ENCODE measurements at regions of chr1 and their contacts with region 1.

Region 1: DNA sequence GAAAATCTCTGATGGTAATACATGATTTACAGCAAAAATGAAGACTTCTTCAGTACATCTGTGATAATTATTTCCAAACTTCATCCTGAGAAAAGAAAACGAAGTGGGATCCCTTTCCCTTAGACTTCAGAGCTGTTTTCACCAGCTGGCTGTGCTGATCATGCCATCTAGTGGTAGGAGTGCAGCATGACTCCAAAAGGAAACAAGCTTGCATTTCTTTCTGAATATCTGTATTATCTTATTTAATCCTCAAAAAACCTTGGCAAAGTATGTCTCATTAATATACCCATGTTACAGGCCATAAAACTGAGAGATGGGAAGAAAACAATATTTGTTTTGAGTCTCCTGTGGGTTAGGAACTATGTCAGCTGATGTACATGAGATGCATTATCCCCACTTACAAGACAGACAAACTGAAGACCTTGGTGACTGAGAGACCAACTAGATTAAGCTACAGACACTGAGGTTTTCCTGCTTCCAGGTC is 9.8 kb upstream of the GJA8 start:
- DNase-seq: peak; percentile 34
- H3K4me3 Mint-ChIP-seq: no peak overlapping the region
- H3K27ac Mint-ChIP-seq: no peak overlapping the region
- H3K4me1 Mint-ChIP-seq: peaks cover 2% of the 10 kb centered on the region
- H3K27me3 Mint-ChIP-seq: peaks cover 7% of the 10 kb centered on the region

Region 2: GRCh38 chr1:147273409-147274336 is 619.1 kb before region 1 on chr1:
- CTCF ChIA-PET with region 1: interaction called, 15 read pairs
- POLR2A ChIA-PET with region 1: no interaction called
- DNase-seq: peak; percentile 23
- H3K4me3 Mint-ChIP-seq: no peak overlapping the region
- H3K27ac Mint-ChIP-seq: no peak overlapping the region
- H3K4me1 Mint-ChIP-seq: peaks cover 7% of the 10 kb centered on the region
- H3K27me3 Mint-ChIP-seq: no peaks in the 10 kb centered on the region

Region 3: GRCh38 chr1:147494998-147495580 is 397.7 kb before region 1 on chr1:
- CTCF ChIA-PET with region 1: interaction called, 12 read pairs
- POLR2A ChIA-PET with region 1: interaction called, 4 read pairs
- DNase-seq: peak; percentile 76
- H3K4me3 Mint-ChIP-seq: no peak overlapping the region
- H3K27ac Mint-ChIP-seq: no peak overlapping the region
- H3K4me1 Mint-ChIP-seq: peaks cover 1% of the 10 kb centered on the region
- H3K27me3 Mint-ChIP-seq: peaks cover 7% of the 10 kb centered on the region

Region 4: DNA sequence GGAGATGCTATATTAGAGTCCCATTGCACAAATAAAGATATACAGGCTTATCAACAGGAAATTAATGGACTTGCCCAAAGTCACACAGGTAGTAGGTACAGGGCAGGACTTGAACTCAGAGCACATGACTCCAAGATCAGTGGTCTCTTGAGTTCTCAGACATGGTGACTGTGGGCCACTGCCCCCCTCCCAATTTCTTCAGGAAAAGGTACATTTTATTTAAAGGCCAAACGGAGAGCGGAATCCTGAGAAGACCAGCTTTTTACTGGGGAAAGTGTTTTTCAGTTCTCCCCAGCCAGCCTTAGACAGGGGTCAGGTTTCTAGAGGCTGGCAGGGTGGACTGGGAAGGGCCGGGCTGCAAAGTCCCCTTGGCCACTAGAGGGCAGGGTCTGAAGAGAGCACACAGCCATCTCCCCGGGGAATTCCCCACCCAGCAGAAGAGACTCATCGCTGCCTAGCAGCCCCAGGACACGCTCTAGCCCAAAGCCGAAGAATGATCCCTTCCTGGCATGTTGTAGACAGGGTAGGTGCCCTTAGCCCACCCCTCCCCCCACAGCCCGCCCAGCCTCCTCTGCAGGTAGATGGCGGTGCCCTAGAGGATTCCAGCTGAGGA is 252.1 kb before region 1 on chr1:
- CTCF ChIA-PET with region 1: interaction called, 10 read pairs
- POLR2A ChIA-PET with region 1: no interaction called
- DNase-seq: peak; percentile 82
- H3K4me3 Mint-ChIP-seq: no peak overlapping the region
- H3K27ac Mint-ChIP-seq: no peak overlapping the region
- H3K4me1 Mint-ChIP-seq: peaks cover 61% of the 10 kb centered on the region
- H3K27me3 Mint-ChIP-seq: no peaks in the 10 kb centered on the region

Region 5: GRCh38 chr1:147700042-147701006 is 192.4 kb before region 1 on chr1:
- CTCF ChIA-PET with region 1: interaction called, 16 read pairs
- POLR2A ChIA-PET with region 1: no interaction called
- DNase-seq: peak; percentile 64
- H3K4me3 Mint-ChIP-seq: no peak overlapping the region
- H3K27ac Mint-ChIP-seq: no peak overlapping the region
- H3K4me1 Mint-ChIP-seq: peaks cover 9% of the 10 kb centered on the region
- H3K27me3 Mint-ChIP-seq: peaks cover 6% of the 10 kb centered on the region

Region 6: DNA sequence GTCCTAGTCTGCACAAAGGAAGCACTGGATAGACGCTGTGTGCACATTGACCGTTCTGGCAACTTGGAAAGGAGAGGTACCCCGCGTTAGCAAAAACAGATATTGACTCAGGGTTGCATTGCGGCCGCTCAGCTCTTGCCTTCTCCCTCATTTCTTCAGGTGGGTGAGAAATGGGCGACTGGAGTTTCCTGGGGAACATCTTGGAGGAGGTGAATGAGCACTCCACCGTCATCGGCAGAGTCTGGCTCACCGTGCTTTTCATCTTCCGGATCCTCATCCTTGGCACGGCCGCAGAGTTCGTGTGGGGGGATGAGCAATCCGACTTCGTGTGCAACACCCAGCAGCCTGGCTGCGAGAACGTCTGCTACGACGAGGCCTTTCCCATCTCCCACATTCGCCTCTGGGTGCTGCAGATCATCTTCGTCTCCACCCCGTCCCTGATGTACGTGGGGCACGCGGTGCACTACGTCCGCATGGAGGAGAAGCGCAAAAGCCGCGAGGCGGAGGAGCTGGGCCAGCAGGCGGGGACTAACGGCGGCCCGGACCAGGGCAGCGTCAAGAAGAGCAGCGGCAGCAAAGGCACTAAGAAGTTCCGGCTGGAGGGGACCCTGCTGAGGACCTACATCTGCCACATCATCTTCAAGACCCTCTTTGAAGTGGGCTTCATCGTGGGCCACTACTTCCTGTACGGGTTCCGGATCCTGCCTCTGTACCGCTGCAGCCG is 15.2 kb after region 1 on chr1:
- CTCF ChIA-PET with region 1: interaction called, 22 read pairs
- POLR2A ChIA-PET with region 1: no interaction called
- DNase-seq: no peak
- H3K4me3 Mint-ChIP-seq: no peak overlapping the region
- H3K27ac Mint-ChIP-seq: no peak overlapping the region
- H3K4me1 Mint-ChIP-seq: peaks cover 12% of the 10 kb centered on the region
- H3K27me3 Mint-ChIP-seq: no peaks in the 10 kb centered on the region